HCT116 (cell line): ENCODE measurements at regions of chr2 and their contacts with region 1.

Region 1: DNA sequence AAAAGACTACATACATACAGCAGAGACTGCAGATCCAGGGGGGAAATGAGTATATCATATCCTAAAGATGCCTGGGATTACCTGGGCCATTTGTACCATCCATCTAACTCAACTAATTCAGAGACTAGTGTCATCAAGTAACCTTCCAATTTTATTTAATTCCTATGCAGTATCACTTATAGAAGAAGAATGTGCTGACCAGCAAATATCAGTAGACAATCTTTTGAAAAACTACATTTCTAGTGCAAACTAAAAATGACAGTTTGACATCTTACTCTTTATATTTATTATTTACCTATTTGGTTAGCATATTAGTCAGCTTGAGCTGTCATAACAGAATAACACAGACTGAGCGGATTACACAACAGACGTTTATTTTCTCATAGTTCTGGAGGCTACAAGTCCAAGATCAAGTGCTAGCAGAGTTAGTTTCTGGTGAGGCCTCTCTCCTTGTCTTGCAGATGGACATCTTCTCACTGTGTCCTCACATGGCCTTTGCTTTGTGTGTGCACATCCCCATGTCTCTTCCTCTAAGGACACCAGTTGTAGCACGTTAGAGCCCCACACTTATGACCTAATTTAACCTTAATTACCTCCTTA is 47.0 kb downstream of the NCKAP5 start:
- DNase-seq: no peak
- ATAC-seq: no peak
- H3K4me3 ChIP-seq: no peak overlapping the region
- H3K27ac ChIP-seq: no peak overlapping the region
- H3K4me1 ChIP-seq: no peaks in the 10 kb centered on the region
- H3K27me3 ChIP-seq: no peaks in the 10 kb centered on the region
- CTCF ChIP-seq: no peak
- POLR2A ChIP-seq: no peak
- RAD21 ChIP-seq: no peak

Region 2: DNA sequence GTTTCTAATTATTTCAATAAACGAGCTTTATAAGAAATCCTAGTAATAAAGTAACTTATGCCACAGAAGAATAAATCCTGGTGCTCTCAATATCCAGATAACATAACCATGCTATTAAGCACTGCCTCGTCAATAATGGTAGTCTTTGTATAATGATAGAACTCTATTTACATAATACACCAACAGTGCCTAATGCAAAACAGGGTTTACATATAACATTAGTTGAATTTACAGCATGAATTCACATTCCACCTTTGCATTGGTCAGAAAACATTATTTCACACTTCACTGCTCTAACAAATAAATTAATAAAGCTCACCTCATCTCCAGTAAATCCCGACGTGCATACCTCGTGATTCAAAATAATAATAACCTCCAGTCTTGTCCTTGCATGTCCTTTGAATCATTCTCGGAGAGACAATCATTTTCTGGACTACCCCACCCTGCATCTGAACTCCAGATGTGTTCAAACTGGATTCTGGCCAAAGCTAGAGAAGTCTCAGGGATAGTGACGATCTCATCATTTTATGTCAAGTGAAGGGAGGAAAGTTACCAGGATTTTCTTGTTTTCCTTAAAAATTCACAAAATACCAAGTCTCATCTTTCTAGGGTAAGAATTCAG is 142.2 kb before region 1 on chr2:
- CTCF ChIA-PET with region 1: no interaction called
- POLR2A ChIA-PET with region 1: no interaction called
- RAD21 ChIA-PET with region 1: no interaction called
- intact Hi-C with region 1: no loop called
- DNase-seq: no peak
- ATAC-seq: no peak
- H3K4me3 ChIP-seq: no peak overlapping the region
- H3K27ac ChIP-seq: no peak overlapping the region
- H3K4me1 ChIP-seq: no peaks in the 10 kb centered on the region
- H3K27me3 ChIP-seq: no peaks in the 10 kb centered on the region
- CTCF ChIP-seq: no peak
- POLR2A ChIP-seq: no peak
- RAD21 ChIP-seq: no peak

Region 3: GRCh38 chr2:133561045-133561852 is 40.0 kb after region 1 on chr2:
- CTCF ChIA-PET with region 1: interaction called, 17 read pairs
- POLR2A ChIA-PET with region 1: no interaction called
- RAD21 ChIA-PET with region 1: no interaction called
- intact Hi-C with region 1: no loop called
- DNase-seq: peak; percentile 27
- ATAC-seq: peak; percentile 49; the same call in 1 of the 2 replicates
- H3K4me3 ChIP-seq: no peak overlapping the region
- H3K27ac ChIP-seq: no peak overlapping the region
- H3K4me1 ChIP-seq: no peaks in the 10 kb centered on the region
- H3K27me3 ChIP-seq: peaks cover 6% of the 10 kb centered on the region; the same call in 1 of the 2 replicates
- CTCF ChIP-seq: peak; percentile 26 to 68 (median 49); a peak in 5 of 6 replicates
- POLR2A ChIP-seq: no peak
- RAD21 ChIP-seq: peak; percentile 64

Region 4: DNA sequence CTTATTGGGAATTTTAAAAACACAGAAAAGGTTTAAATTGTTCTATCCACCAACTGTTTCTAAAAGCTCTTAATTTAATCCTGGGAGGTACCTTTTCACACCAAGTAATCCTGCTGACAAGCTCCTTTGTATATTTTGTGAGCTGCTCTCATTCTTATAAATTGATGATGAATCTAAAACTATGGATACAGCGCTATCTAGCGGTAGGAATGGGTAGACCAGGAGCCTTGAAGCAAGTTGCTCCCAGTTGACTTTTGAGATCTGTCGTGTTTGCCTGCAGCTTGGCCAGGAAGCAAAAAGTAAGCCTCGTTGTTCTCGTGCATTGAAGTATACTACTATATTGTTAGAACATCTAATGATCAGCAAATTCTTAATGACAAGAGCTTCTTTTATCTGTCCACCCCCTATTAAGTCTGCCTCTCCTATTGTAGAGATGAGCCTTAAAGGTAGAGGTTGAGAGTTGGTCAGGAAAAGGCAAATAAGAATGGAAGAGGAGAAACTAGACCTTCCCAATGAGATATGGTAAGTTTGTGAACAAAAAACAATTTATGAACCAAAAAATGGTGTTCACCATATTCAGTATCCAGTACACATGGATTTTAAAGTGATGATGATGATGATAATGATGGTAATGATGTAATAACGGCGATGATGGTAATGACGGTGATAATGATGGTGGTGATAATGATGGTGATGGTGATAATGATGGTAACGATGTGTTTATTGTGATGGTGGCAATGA is 259.0 kb after region 1 on chr2:
- CTCF ChIA-PET with region 1: interaction called, 30 read pairs
- POLR2A ChIA-PET with region 1: no interaction called
- RAD21 ChIA-PET with region 1: no interaction called
- intact Hi-C with region 1: loop called (anchors 1 kb)
- DNase-seq: peak; percentile 52
- ATAC-seq: peak; percentile 83
- H3K4me3 ChIP-seq: no peak overlapping the region
- H3K27ac ChIP-seq: no peak overlapping the region
- H3K4me1 ChIP-seq: peaks cover 2 to 7% of the 10 kb centered on the region in 2 experiments; a peak in 3 of 4 replicates
- H3K27me3 ChIP-seq: no peaks in the 10 kb centered on the region
- CTCF ChIP-seq: peak; percentile 36 to 83 (median 74); a peak in 5 of 6 replicates
- POLR2A ChIP-seq: no peak
- RAD21 ChIP-seq: peak; percentile 71